Ovary (tissue), 10 donors: ENCODE measurements at regions of chr11 and their contacts with region 1.

Region 1: GRCh38 chr11:92644493-92645445 is 324.7 kb upstream of the MTNR1B start:
- DNase-seq: no peak
- H3K4me3 ChIP-seq: no peak overlapping the region
- H3K27ac ChIP-seq: no peak overlapping the region
- H3K4me1 ChIP-seq: no peaks in the 10 kb centered on the region
- H3K27me3 ChIP-seq: no peaks in the 10 kb centered on the region
- CTCF ChIP-seq: no peak
- EP300 ChIP-seq: no peak
- POLR2A ChIP-seq: no peak

Region 2: GRCh38 chr11:92505692-92506091 is 139.1 kb before region 1 on chr11:
- intact Hi-C with region 1: no loop called
- DNase-seq: no peak
- H3K4me3 ChIP-seq: no peak overlapping the region
- H3K27ac ChIP-seq: no peak overlapping the region
- H3K4me1 ChIP-seq: no peaks in the 10 kb centered on the region
- H3K27me3 ChIP-seq: no peaks in the 10 kb centered on the region
- CTCF ChIP-seq: no peak
- EP300 ChIP-seq: no peak
- POLR2A ChIP-seq: no peak

Region 3: GRCh38 chr11:92596596-92597317 is 48.0 kb before region 1 on chr11:
- intact Hi-C with region 1: no loop called
- DNase-seq: no peak
- H3K4me3 ChIP-seq: no peak overlapping the region
- H3K27ac ChIP-seq: no peak overlapping the region
- H3K4me1 ChIP-seq: no peaks in the 10 kb centered on the region
- H3K27me3 ChIP-seq: no peaks in the 10 kb centered on the region
- CTCF ChIP-seq: no peak
- EP300 ChIP-seq: no peak
- POLR2A ChIP-seq: no peak

Region 4: GRCh38 chr11:92623055-92623454 is 21.7 kb before region 1 on chr11:
- intact Hi-C with region 1: loop called in 1 of 4 experiments (anchors 2 kb)
- DNase-seq: no peak
- H3K4me3 ChIP-seq: no peak overlapping the region
- H3K27ac ChIP-seq: no peak overlapping the region
- H3K4me1 ChIP-seq: no peaks in the 10 kb centered on the region
- H3K27me3 ChIP-seq: no peaks in the 10 kb centered on the region
- CTCF ChIP-seq: no peak
- EP300 ChIP-seq: no peak
- POLR2A ChIP-seq: no peak

Region 5: DNA sequence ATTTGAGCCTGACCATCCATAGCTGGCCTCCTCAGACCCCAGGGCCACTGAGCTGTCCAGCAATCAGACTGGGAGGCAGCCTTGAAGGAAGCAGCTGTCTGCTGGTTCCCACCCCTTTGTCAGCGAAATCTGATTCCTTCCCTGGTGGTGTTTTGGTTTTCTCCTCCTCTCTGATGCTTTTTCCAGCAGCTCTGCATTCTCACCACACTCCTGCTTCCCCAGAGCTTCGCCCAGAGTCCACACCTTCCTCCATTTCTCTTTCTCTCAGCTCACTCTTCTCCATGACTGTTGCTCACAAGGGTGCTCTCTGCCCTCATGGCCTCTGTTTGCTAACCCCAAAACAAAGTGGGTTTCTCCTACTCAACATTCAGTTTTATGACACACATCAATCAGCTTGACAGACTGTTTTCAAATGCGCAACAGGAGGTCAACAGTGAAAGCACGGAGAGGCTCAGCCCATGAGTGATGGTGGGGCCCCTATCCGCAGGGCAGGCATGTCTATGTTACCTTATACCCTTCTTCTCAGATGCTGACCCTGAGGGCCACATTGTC is 194.1 kb after region 1 on chr11:
- intact Hi-C with region 1: no loop called
- DNase-seq: no peak
- H3K4me3 ChIP-seq: no peak overlapping the region
- H3K27ac ChIP-seq: no peak overlapping the region
- H3K4me1 ChIP-seq: no peaks in the 10 kb centered on the region
- H3K27me3 ChIP-seq: no peaks in the 10 kb centered on the region
- CTCF ChIP-seq: no peak
- EP300 ChIP-seq: no peak
- POLR2A ChIP-seq: no peak